ENCODE measurements at regions of chr2 and their contacts with region 1.

Region 1: GRCh38 chr2:120833127-120833675 is 97.5 kb downstream of the GLI2 start:
- DNase-seq: no peak
- H3K4me3 ChIP-seq: no peak overlapping the region
- H3K27ac ChIP-seq: no peak overlapping the region
- H3K4me1 ChIP-seq: peaks cover 0 to 31% of the 10 kb centered on the region in 2 experiments; a peak in 1 of 4 replicates
- H3K27me3 ChIP-seq: no peaks in the 10 kb centered on the region
- CTCF ChIP-seq: 0 out of 2 replicates have a peak, but pooled peaks have one; percentile 13
- EP300 ChIP-seq: no peak
- RAD21 ChIP-seq: peak; percentile 14; the same call in 1 of the 2 replicates

Region 2: DNA sequence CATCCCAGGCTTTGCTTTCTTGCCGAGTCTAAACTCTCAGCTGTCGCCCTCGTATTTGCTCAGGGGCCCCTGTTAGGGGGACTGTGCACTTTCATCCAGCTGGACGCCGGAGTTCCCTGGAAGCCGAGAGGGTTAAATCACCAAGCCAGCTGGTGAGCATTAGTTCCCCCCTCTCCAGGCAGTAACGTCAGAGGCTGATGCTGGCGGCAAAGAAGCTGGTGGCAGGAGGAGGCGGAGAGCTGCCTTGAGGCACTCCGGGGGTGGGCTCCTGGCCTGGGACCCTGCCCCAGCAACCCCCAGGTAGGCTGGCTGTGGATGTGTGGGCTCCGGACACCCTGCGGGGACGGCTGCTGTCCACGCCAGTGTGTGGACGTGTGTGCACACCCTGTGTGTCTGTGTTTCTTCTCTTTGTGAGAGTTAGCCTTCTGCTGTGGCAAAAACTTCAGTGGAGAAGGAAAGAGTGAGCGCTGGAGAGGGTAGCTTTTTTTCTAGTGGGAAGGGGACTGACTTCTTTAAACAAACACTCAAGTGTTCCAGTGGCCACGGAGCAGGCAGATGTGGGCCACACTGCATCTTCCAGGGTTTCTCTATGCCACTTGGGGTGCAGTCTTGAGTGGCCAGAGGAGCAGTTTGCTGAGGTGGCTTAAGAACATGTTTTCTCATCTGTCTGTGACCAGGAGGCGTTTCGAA is 12.8 kb before region 1 on chr2:
- CTCF ChIA-PET with region 1: no interaction called
- POLR2A ChIA-PET with region 1: no interaction called
- DNase-seq: peak; percentile 81
- H3K4me3 ChIP-seq: no peak overlapping the region; a peak in 1 of 4 replicates
- H3K27ac ChIP-seq: peak overlapping the region in 1 of 2 experiments; percentile 62; a peak in 2 of 4 replicates
- H3K4me1 ChIP-seq: peaks cover under 1 to 34% of the 10 kb centered on the region in 2 experiments; a peak in 3 of 4 replicates
- H3K27me3 ChIP-seq: no peaks in the 10 kb centered on the region
- CTCF ChIP-seq: no peak
- EP300 ChIP-seq: no peak
- RAD21 ChIP-seq: no peak

Region 3: GRCh38 chr2:120847700-120848321 is 14.6 kb after region 1 on chr2:
- CTCF ChIA-PET with region 1: interaction called, 10 read pairs
- POLR2A ChIA-PET with region 1: no interaction called
- DNase-seq: peak; percentile 84
- H3K4me3 ChIP-seq: no peak overlapping the region
- H3K27ac ChIP-seq: peak overlapping the region in 1 of 2 experiments; percentile 64; a peak in 2 of 4 replicates
- H3K4me1 ChIP-seq: peaks cover 0 to 51% of the 10 kb centered on the region in 2 experiments; a peak in 1 of 4 replicates
- H3K27me3 ChIP-seq: no peaks in the 10 kb centered on the region
- CTCF ChIP-seq: no peak
- EP300 ChIP-seq: peak in 1 of 2 experiments; percentile 59; a peak in 1 of 4 replicates
- RAD21 ChIP-seq: peak; percentile 52